H1 (cell line): ENCODE measurements at regions of chr17 and their contacts with region 1.

Region 1: GRCh38 chr17:48618256-48618897 is 3.3 kb upstream of the HOXB8 start:
- DNase-seq: peak in 1 of 2 experiments; percentile 95
- H3K4me3 ChIP-seq: peak overlapping the region in 1 of 4 experiments; percentile 19; a peak in 1 of 8 replicates
- H3K27ac ChIP-seq: no peak overlapping the region
- H3K4me1 ChIP-seq: peaks cover 0 to 3% (median 3%) of the 10 kb centered on the region in 4 experiments; a peak in 5 of 7 replicates
- H3K27me3 ChIP-seq: peaks cover 97 to 100% (median 99%) of the 10 kb centered on the region in 4 experiments
- CTCF ChIP-seq: peak; percentile 77 to 95 (median 82)
- EP300 ChIP-seq: no peak
- POLR2A ChIP-seq: no peak
- RAD21 ChIP-seq: peak; percentile 96

Region 2: DNA sequence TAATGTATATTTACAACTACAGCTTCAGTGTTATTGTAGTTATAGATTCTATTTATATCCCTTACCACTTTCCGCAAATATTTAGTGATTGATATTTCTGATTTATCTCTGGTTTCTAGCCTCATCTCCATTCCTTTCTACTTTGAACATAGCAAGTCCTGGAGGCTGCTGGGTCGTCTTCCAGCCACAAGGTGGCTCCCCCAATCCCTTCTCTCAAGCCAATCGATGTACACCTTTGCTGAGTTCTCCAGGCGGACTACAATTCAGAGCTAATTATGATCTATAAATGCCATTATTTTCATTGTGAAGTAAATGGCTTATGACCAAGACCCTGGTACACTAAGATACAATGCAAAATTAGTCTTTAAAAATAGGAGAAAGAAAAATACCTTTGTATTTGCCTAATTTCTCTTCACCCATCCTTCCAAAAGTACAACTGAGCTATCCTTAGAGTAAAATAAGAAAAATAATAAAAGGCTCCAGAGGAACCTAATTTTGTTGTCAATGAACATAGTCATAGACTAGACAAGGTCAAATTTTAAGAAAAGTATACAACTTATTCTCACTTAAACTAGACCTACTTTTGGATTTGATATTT is 310.5 kb before region 1 on chr17:
- CTCF ChIA-PET with region 1: interaction called, 10 read pairs
- POLR2A ChIA-PET with region 1: no interaction called
- DNase-seq: peak in 1 of 2 experiments; percentile 15
- H3K4me3 ChIP-seq: no peak overlapping the region
- H3K27ac ChIP-seq: no peak overlapping the region
- H3K4me1 ChIP-seq: no peaks in the 10 kb centered on the region
- H3K27me3 ChIP-seq: no peaks in the 10 kb centered on the region; a peak in 2 of 7 replicates
- CTCF ChIP-seq: peak; percentile 78 to 87 (median 81)
- EP300 ChIP-seq: no peak
- POLR2A ChIP-seq: no peak
- RAD21 ChIP-seq: peak; percentile 58 to 69

Region 3: GRCh38 chr17:48335858-48336500 is 282.4 kb before region 1 on chr17:
- CTCF ChIA-PET with region 1: interaction called, 10 read pairs
- POLR2A ChIA-PET with region 1: no interaction called
- DNase-seq: no peak
- H3K4me3 ChIP-seq: no peak overlapping the region
- H3K27ac ChIP-seq: no peak overlapping the region
- H3K4me1 ChIP-seq: no peaks in the 10 kb centered on the region
- H3K27me3 ChIP-seq: peaks cover 0 to 2% (median 0%) of the 10 kb centered on the region in 4 experiments; a peak in 2 of 7 replicates
- CTCF ChIP-seq: peak in 2 of 3 experiments; percentile 37 to 50; a peak in 2 of 4 replicates
- EP300 ChIP-seq: no peak
- POLR2A ChIP-seq: no peak
- RAD21 ChIP-seq: peak; percentile 49 to 67

Region 4: GRCh38 chr17:48547808-48548522 is 70.4 kb before region 1 on chr17:
- CTCF ChIA-PET with region 1: interaction called, 10 read pairs
- POLR2A ChIA-PET with region 1: no interaction called
- DNase-seq: no peak
- H3K4me3 ChIP-seq: peak overlapping the region in 1 of 4 experiments; percentile 2; a peak in 1 of 8 replicates
- H3K27ac ChIP-seq: no peak overlapping the region
- H3K4me1 ChIP-seq: peaks cover 7 to 30% (median 11%) of the 10 kb centered on the region in 4 experiments
- H3K27me3 ChIP-seq: peaks cover 94 to 100% (median 99%) of the 10 kb centered on the region in 4 experiments
- CTCF ChIP-seq: no peak
- EP300 ChIP-seq: no peak
- POLR2A ChIP-seq: no peak
- RAD21 ChIP-seq: no peak

Region 5: DNA sequence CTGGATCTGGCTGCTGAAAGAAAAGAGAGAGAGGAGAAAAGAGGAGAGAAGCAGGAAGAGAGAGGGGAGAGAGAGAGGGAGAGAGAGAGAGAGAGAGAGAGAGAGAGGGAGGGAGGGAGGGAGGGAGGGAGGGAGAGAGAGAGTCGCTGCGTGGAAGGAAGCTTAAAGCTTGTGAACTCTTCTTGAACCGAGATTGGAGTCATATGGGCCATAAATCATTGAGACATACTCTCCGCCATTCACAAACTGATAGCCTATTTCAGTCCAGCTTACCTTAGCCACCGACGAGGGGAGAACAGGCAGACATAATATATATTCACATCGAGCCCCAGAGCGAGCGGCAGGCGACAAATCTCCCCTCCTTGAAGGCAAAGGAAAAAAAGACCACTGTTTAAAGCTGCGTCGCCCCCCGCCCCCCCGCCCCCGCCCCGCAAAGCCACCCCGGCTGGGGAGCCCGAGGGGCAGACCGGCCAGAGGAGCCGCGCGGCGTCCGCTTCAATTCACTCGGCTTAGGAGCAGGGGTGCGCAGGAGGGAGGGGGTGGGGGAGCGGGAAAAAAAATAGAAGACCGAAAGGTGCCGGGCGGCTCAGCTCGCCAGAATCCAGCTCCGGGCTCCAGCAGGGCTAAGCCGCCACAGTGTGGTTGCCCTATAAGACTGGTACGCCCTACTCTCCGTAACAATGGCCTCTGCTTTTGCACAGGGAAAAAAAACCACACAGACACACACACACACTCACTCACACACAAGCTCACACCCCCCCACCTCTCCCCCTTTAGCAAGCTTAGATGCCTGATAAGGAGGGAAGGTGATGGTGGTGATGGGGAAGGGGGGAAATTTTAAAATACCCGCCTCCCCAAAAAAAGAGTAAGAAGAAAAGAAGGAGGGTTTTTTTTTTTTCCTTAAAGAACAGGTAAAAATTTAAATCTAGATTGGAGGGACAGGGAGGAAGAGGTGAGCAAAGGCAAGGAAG is 62.8 kb before region 1 on chr17:
- CTCF ChIA-PET with region 1: interaction called, 11 read pairs
- POLR2A ChIA-PET with region 1: no interaction called
- DNase-seq: no peak
- H3K4me3 ChIP-seq: no peak overlapping the region
- H3K27ac ChIP-seq: no peak overlapping the region
- H3K4me1 ChIP-seq: peaks cover 0 to 11% (median 9%) of the 10 kb centered on the region in 4 experiments; a peak in 5 of 7 replicates
- H3K27me3 ChIP-seq: peaks cover 98 to 100% (median 99%) of the 10 kb centered on the region in 4 experiments
- CTCF ChIP-seq: no peak
- EP300 ChIP-seq: no peak
- POLR2A ChIP-seq: no peak
- RAD21 ChIP-seq: no peak

Region 6: GRCh38 chr17:48586355-48587258 is 31.8 kb before region 1 on chr17:
- CTCF ChIA-PET with region 1: interaction called, 13 read pairs
- POLR2A ChIA-PET with region 1: interaction called, 4 read pairs
- DNase-seq: no peak
- H3K4me3 ChIP-seq: 0 out of 8 replicates have a peak overlapping the region, but pooled peaks of 1 of the 4 experiments have one; percentile 42
- H3K27ac ChIP-seq: no peak overlapping the region
- H3K4me1 ChIP-seq: peaks cover 0 to 5% (median 3%) of the 10 kb centered on the region in 4 experiments; a peak in 4 of 7 replicates
- H3K27me3 ChIP-seq: peaks cover 99 to 100% (median 100%) of the 10 kb centered on the region in 4 experiments
- CTCF ChIP-seq: no peak
- EP300 ChIP-seq: no peak
- POLR2A ChIP-seq: no peak
- RAD21 ChIP-seq: no peak

Region 7: DNA sequence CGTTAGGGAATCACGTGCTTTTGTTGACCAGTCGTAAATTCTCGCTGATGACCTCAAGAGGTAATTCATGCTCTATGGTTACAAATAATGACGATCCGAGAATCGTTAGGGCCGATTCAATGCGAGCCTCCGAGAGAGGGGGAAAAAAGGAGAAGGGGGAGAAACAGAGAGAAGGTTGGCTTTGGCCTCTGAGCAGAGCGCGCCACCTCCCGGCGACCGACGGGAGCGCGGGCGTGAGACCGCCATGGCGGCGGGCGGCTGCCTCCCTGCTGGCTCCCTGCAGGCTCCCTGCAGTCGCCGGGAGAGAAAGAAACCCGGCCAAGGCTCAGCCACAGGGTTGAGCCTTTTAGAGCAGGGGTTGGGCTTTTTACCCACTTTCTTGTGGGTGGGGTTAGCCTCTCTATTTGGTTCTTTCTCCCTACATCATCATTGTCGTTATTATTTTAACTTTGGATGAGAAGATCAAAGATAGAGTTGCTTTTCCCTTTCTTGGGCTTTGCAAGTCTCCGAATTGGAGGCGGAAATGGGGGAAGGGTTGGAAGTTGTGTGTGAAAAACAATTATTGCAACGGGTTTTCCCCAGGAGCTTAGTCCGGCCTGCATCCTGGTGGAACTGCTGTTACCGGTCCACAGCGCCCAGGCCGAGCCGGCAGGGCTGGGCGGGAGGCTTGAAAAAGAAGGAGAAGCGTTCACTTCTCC is 24.4 kb before region 1 on chr17:
- CTCF ChIA-PET with region 1: interaction called, 21 read pairs
- POLR2A ChIA-PET with region 1: interaction called, 3 read pairs
- DNase-seq: peak; percentile 51 to 95
- H3K4me3 ChIP-seq: no peak overlapping the region
- H3K27ac ChIP-seq: no peak overlapping the region
- H3K4me1 ChIP-seq: peaks cover 0 to 12% (median 4%) of the 10 kb centered on the region in 4 experiments; a peak in 5 of 7 replicates
- H3K27me3 ChIP-seq: peaks cover 96 to 100% (median 99%) of the 10 kb centered on the region in 4 experiments
- CTCF ChIP-seq: peak; percentile 86 to 89 (median 89)
- EP300 ChIP-seq: no peak
- POLR2A ChIP-seq: no peak
- RAD21 ChIP-seq: peak; percentile 90 to 91

Region 8: DNA sequence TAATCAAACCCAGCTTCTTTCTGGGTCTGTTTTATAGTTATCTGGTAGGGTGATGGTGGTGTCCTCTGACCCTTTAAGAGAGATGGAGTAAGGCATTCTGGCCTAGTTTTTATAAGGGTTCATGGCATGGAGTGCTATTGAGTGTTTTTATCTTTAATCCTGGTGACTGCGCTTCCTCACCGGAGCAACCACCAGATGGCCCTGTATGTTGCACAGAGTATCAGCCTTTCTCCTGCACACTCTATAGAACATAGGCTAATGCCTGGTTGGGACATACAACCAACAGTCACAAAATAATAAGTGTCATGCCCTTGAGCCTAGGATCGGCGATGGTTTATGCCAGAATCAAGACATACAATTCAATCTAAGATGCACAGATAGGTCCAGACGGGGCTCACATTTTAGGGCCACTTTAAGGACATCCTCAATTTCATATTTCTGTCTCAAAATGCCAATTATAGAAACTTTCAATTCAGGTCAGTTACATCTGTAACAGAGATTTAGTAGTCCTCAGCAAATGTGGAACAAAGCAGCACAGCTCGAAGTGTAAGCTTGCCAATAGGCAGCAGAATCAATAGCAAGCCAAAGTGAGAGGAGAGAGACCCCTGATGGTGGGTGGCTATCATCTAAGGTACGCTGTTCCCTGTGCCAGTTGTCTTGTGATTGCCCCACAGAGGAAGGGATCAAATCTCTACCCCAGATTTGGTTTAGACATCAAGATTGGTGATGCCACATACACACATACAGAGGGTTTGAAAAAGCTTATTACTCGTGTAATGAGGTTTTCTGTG is 45.0 kb after region 1 on chr17:
- CTCF ChIA-PET with region 1: no interaction called
- POLR2A ChIA-PET with region 1: no interaction called
- DNase-seq: no peak
- H3K4me3 ChIP-seq: no peak overlapping the region
- H3K27ac ChIP-seq: no peak overlapping the region
- H3K4me1 ChIP-seq: no peaks in the 10 kb centered on the region
- H3K27me3 ChIP-seq: peaks cover 0 to 5% (median 0%) of the 10 kb centered on the region in 4 experiments; a peak in 1 of 7 replicates
- CTCF ChIP-seq: peak; percentile 26 to 40 (median 32); a peak in 3 of 4 replicates
- EP300 ChIP-seq: no peak
- POLR2A ChIP-seq: no peak
- RAD21 ChIP-seq: peak in 1 of 2 experiments; percentile 41; a peak in 1 of 4 replicates

Region 9: GRCh38 chr17:48779421-48779820 is 161.0 kb after region 1 on chr17:
- CTCF ChIA-PET with region 1: no interaction called
- POLR2A ChIA-PET with region 1: no interaction called
- DNase-seq: no peak
- H3K4me3 ChIP-seq: no peak overlapping the region
- H3K27ac ChIP-seq: no peak overlapping the region
- H3K4me1 ChIP-seq: no peaks in the 10 kb centered on the region
- H3K27me3 ChIP-seq: no peaks in the 10 kb centered on the region; a peak in 1 of 7 replicates
- CTCF ChIP-seq: no peak
- EP300 ChIP-seq: no peak
- POLR2A ChIP-seq: no peak
- RAD21 ChIP-seq: no peak